AG04449 (cell line): ENCODE measurements at regions of chr2 and their contacts with region 1.

Region 1: DNA sequence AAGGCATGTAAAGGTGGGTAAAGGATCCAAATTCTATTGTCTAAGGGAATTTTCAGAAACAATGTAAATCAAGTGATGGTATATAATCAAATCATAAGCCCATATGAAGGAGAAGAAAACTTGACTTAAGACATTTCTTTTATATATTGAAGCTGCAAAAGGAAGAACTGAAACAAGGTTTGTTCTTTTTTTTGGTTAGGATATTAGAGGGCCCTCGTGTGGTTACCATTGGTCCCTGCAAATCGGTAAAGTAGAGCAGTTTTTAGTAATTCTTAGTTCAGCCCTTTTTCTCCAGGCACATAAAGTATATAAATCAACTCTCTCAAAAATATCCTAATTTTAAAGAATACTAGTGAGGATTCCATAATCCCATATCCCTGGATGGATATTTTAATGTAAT is 105.6 kb upstream of the STK17B start:
- DNase-seq: no peak
- H3K4me3 ChIP-seq: no peak overlapping the region
- CTCF ChIP-seq: peak; percentile 42

Region 2: GRCh38 chr2:196171248-196171871 is 105.6 kb before region 1 on chr2 and contains the start of gene STK17B:
- CTCF ChIA-PET with region 1: interaction called, 19 read pairs
- POLR2A ChIA-PET with region 1: interaction called, 3 read pairs
- DNase-seq: peak; percentile 44
- H3K4me3 ChIP-seq: peak within 1 kb of the TSS; percentile 83
- CTCF ChIP-seq: peak; percentile 0

Region 3: DNA sequence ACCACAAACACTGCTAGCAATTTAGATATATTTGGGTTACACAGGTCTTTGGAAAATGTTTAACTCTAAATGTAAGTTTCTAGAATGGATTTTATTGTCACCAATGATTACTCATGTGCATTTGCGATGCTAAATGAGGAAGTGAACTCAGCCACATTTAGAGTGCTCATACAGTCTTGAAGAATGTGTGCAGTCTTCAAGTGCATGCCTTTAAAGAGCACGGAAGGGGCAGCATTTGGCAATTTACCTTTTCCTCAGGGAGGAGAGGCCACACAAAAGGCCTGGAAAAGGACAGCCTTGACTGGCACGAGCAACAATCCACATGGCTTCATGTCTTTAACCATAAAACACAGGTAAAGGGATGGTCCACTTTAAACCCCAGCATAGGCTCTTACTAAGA is 27.1 kb before region 1 on chr2:
- CTCF ChIA-PET with region 1: interaction called, 10 read pairs
- POLR2A ChIA-PET with region 1: interaction called, 5 read pairs
- DNase-seq: no peak
- H3K4me3 ChIP-seq: no peak overlapping the region
- CTCF ChIP-seq: no peak

Region 4: DNA sequence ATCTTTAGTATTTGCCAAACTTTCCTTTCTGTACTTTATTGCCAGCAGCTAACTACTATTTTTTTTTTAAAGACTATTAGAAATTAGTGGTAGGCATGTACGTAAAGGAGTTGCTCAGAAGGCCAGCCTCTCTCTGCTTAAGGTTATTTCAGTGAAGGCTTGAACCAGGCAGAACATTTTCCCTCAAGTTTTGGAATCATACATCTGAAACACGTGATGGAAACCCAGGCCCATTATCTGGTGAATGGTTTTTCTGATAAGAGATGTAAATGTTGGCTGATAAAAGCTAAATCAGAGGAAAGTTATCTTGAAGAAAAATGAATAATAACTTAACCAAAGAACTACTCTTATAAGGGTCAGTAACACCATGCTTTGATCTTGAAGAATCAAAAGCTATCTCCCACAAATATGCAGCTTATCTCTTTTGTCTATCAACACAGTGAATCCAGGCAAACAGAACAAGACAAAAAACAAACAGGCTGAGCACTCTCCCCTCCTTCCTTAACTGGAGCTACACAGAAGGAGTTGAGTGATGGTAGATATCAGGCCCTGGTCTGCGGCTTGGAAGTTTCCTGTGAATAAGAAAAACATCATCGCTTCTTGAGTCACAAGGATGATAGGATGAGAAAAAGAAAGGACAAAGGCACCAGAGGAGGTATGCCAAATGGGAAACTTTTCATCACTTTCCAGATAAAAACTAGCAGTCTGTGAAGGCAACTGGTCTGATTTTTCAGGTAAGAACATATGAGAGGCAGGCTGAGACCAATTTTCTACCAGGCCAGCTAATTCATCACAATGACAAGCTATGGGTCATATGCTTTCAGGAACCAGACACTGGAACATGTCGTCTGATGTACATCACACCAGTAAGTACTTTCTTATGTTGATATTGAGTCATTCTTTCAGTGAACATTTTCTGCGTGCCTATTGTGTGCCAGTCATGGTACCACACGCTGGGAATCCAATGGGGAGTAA is 17.2 kb before region 1 on chr2:
- CTCF ChIA-PET with region 1: interaction called, 37 read pairs
- POLR2A ChIA-PET with region 1: interaction called, 4 read pairs
- DNase-seq: no peak
- H3K4me3 ChIP-seq: no peak overlapping the region
- CTCF ChIP-seq: no peak